Colonic mucosa (tissue), 4 donors: ENCODE measurements at regions of chr9 and their contacts with region 1.

Region 1: GRCh38 chr9:3732077-3733038 is 206.6 kb upstream of the RFX3 start:
- DNase-seq: peak; percentile 73
- H3K4me3 ChIP-seq: no peak overlapping the region
- H3K27ac ChIP-seq: no peak overlapping the region
- H3K4me1 ChIP-seq: no peaks in the 10 kb centered on the region
- H3K27me3 ChIP-seq: no peaks in the 10 kb centered on the region
- CTCF ChIP-seq: peak; percentile 58

Region 2: GRCh38 chr9:4228606-4229005 is 496.2 kb after region 1 on chr9:
- intact Hi-C with region 1: loop called (anchors 10 kb)
- DNase-seq: peak; percentile 38
- H3K4me3 ChIP-seq: no peak overlapping the region
- H3K27ac ChIP-seq: no peak overlapping the region
- H3K4me1 ChIP-seq: no peaks in the 10 kb centered on the region
- H3K27me3 ChIP-seq: no peaks in the 10 kb centered on the region
- CTCF ChIP-seq: peak; percentile 41

Region 3: GRCh38 chr9:4315582-4316215 is 583.3 kb after region 1 on chr9:
- intact Hi-C with region 1: loop called (anchors 10 kb)
- DNase-seq: peak; percentile 79
- H3K4me3 ChIP-seq: no peak overlapping the region
- H3K27ac ChIP-seq: no peak overlapping the region
- H3K4me1 ChIP-seq: no peaks in the 10 kb centered on the region
- H3K27me3 ChIP-seq: no peaks in the 10 kb centered on the region
- CTCF ChIP-seq: peak; percentile 80

Region 4: DNA sequence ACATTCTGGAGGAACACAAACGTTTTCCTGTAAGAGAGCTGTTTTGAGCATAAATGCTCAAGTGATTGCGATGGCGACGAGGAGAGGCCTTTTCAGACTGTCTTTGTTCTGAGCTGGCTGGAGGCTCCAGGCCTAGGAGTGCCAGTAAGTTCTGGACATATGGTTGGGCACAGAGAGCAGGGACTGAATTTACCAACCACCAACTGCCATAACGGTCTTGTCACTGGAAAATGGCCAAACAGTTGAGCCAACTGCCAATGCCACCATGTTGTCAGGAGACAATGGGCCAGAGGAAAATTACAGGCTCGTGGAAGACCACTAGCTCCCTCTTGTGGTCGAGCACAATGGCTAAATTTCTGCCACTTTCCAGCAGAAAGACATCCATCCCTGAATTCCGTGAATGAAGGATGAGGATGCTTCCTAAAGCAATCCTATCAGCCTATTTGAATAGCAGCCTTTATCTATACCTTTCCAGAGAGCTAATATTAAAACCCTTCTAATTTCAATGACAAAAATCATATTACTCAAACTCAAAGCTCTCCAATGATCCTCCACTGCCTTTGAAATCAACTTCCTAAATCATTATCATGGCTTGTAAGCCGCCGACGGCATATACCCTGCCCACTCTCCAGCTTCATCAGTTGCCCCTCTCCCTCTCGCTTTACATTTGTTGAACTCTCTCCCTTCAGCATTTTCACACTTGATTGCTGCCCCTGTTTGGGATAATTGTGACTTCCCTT is 634.4 kb after region 1 on chr9:
- intact Hi-C with region 1: loop called (anchors 10 kb)
- DNase-seq: peak; percentile 26
- H3K4me3 ChIP-seq: no peak overlapping the region
- H3K27ac ChIP-seq: no peak overlapping the region
- H3K4me1 ChIP-seq: no peaks in the 10 kb centered on the region
- H3K27me3 ChIP-seq: no peaks in the 10 kb centered on the region
- CTCF ChIP-seq: peak; percentile 50